ENCODE measurements at regions of chr9 and their contacts with region 1.

Region 1: DNA sequence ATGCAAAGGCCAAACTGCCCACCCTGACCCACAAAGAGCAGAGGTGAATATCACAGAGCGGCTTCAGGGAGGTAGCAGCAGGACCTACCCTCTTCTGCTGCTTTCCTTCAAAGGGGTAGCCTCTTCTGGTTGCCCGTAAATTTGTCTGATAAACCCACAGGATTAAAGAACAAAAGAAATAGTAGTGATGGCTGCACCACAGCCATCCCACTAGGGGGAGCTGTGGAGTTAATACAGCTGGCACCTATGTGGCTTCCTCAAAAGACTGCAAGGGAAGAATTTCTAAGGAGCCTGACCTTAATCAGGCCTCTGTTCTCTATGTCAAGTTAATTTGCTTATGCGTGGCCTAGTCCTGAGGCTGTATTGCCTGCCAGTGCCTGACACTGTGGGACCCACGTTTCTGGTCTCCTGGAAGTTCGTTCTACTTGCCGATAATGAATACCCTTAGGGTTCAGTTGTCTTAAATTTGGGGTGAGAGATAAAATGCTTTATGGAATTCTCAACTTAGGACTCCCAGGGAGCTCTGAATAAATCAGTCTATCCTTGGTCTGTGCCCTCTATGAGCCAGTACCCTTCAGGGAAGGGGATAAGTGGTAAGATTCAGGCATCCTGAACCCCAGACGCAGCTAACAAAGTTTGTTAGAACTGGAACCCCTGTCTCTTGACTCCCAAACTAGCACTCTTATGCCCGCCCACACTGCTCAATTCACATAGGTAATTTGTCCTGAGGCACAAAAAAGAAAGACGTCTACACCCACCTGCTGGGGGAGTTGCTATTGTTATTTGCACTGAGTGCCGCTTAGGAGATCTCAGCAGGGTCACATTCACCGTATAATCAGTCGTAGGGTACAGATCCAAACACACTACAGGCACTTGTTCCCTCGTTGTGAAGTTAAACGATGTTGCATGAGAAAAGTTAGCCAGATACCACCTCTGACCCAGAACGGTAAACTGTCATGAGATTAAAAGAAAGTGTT is 77.1 kb downstream of the SUSD1 start:
- DNase-seq: peak in 41 of 42 donors; percentile 38 to 84 (median 64)

Region 2: GRCh38 chr9:112140936-112141335 is 42.9 kb after region 1 on chr9:
- intact Hi-C with region 1: no loop called
- DNase-seq: no peak

Region 3: DNA sequence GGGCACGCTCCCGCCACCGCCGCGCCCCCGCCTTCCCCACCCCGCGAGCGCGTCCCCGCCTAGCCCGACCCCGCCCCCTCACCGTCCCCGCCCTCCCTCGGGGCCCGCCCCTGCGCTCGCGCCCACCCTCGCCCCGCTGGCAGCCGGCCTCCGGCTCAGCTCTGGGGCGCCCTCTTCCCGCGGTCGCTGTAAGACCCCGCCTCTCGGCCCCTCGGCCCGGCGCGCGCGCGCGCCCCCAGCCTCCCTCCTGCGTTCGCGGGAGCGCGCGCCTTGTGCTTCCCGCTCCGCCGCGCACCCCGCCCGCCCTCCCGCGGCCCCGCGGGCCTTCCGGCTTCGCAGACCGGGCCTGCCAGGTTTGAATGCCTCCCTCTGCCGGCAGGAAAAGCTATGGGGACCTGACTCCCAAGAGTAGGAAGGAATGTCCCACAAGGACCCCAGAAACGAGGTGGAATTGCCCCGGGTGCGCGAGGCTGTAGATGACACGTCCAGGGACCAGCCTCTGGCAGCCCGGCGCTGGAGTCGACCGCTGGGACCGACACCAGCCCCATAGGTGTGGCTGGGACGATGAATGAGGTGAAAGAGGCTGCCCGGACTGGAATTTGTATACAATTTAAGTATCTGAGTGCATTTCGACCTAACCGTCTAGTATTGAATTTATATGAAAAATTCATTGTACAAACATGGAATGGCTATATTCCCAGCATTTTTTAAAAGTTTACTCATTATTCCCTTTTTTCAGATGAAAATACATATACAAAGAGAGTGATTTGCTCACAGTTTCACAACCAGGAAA is 235.8 kb after region 1 on chr9:
- intact Hi-C with region 1: loop called (anchors 10 kb)
- DNase-seq: peak in 41 of 42 donors; percentile 70 to 97 (median 93)

Measured in head of caudate nucleus (tissue), 42 donors.